ENCODE measurements at regions of chr3 and their contacts with region 1.

Region 1: DNA sequence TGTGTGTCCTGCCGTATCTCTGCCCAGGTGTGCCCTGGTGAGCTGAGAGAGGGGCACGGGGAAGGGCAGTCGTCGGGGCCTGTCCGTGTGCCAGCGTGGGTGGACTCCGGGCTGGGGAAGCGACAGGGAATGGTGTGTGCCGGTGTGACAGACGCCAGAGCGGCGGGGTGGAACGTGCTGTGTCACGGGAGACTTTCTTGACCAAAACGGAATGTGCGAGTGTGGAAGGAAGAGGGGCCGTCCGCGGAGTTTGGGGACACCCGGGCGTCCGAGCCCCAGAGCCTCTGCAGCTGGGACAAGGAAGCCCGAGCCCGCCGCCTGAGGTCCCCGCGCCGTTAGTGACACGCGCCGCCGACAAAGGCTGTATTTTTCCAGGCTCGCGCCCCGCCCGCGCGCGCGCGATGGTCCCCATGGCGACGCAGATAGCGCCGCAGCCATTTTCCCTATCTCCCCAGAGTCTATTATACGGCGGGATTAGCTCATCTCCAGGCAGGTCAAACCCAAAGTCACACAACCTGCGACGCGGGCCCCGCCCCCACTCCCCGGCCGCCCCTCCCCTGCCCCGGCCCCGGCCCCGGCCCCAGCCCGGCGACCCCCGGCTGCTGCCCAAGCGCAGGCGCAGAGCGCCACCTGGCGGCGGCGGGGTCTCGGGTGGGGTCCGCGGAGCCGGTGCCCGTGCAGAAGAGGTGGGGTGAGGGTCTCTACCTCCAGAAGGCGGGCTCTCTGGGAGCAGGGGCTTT is 4.6 kb upstream of the GATA2 start:
- DNase-seq: peak; percentile 61
- H3K4me3 ChIP-seq: peak overlapping the region; percentile 49
- H3K27ac ChIP-seq: no peak overlapping the region
- H3K4me1 ChIP-seq: no peaks in the 10 kb centered on the region
- CTCF ChIP-seq: peak; percentile 80; the same call in 1 of the 2 replicates

Region 2: GRCh38 chr3:128226795-128227395 is 270.7 kb before region 1 on chr3:
- CTCF ChIA-PET with region 1: no interaction called
- POLR2A ChIA-PET with region 1: no interaction called
- intact Hi-C with region 1: loop called (anchors 5 kb)
- DNase-seq: peak; percentile 36
- H3K4me3 ChIP-seq: no peak overlapping the region
- H3K27ac ChIP-seq: no peak overlapping the region
- H3K4me1 ChIP-seq: no peaks in the 10 kb centered on the region
- CTCF ChIP-seq: peak; percentile 88

Region 3: DNA sequence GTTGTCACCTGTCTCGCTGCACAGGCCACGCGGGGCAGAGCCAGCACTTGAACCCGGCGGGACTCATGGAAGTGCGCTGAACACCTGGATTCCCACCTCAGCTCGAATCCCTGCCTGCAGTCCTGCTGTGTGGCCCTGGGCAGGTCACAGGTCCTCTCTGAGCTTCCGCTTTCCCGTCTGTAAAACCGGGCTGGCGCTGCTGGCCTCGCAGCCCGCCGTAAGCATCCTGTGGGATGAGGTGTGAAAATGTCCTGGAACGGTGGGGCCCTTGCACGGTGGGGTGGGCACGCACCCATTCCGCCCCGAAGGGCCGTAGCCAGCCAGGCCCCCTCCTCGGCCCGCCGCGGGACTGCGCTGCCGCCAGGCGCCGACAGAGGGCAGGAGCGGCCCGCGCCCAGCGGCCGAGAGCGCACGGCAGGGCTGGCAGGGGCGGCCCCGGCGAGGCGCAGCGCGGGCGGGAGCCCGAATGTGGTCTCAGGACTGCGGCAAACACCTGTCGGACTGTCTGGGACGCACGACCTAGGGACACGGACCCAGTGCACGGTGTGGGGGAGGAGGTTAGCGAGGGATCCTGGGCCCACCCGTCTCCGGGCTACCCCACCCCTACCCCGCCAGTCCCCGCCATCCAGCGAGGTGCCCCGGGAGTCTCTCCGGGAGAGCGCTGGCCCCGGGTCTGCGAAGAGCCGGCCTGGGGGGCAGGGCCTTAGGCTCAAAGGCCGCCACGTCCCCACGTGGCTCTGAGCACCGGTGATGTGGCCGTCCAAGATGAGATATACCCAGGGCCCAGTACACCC is 71.2 kb before region 1 on chr3:
- CTCF ChIA-PET with region 1: no interaction called
- POLR2A ChIA-PET with region 1: no interaction called
- intact Hi-C with region 1: loop called (anchors 1 kb)
- DNase-seq: peak; percentile 40
- H3K4me3 ChIP-seq: no peak overlapping the region
- H3K27ac ChIP-seq: no peak overlapping the region
- H3K4me1 ChIP-seq: no peaks in the 10 kb centered on the region
- CTCF ChIP-seq: peak; percentile 73

Region 4: GRCh38 chr3:129507181-129507831 is 1009.7 kb after region 1 on chr3:
- CTCF ChIA-PET with region 1: no interaction called
- POLR2A ChIA-PET with region 1: no interaction called
- intact Hi-C with region 1: no loop called
- DNase-seq: no peak
- H3K4me3 ChIP-seq: no peak overlapping the region
- H3K27ac ChIP-seq: no peak overlapping the region
- H3K4me1 ChIP-seq: no peaks in the 10 kb centered on the region
- CTCF ChIP-seq: no peak